ENCODE measurements at regions of chr1 and their contacts with region 1.

Region 1: GRCh38 chr1:109493805-109494539 is at the start of gene CYB561D1:
- DNase-seq: peak; percentile 95
- ATAC-seq: peak; percentile 89
- H3K4me3 Mint-ChIP-seq: peak within 1 kb of the TSS; percentile 98
- H3K27ac Mint-ChIP-seq: peak within 1 kb of the TSS; percentile 90
- H3K4me1 Mint-ChIP-seq: peaks cover 45% of the 10 kb centered on the region
- H3K27me3 Mint-ChIP-seq: no peaks in the 10 kb centered on the region
- total RNA-seq, gene CYB561D1: 7.1 to 8.7 TPM

Region 2: DNA sequence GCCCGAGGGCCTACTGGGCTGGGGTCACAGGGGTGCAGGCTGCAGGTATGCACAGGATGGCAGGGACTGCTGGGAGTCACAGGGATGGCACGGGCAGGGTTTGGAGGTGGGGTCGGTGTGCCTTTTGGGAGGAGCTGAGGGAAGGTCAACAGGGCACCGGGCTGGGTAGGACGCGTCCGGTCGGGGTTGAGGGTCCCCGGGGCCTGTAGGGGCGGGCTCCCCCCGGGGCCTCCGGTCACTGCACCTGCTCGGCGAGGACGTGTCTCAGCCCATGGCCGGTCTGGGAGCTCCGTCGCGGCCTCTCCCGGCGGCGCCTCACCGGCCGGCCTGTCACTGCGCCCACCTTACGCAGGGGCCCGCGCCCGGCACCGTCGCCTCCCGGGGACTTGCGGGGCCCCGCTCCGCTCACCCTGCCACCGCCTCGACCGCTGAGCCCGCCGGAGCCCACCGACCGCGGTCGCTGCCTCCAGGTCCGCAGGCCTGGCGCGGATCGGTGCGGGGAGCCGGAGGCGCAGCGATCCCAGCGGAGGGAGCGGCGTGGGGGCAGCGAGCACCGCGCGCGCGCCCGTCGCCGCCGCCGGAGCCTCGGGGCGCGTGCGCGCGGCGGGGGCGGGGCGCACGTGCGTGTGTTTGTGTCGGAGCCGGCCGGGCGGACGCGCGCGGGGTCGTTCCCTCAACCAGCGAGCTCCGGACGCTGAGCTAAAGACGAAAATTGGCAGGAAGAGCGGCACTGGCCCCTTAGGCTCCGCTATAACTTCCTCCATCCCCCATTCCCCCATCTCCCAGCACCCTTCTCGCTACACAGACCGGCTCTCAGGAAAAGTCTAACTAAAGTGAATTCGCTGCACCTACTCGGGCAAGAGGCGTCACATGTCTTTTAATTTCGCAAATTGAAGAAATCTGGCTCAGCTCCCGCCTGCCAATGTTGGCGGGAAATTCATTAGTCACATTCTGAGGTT is 15.5 kb after region 1 on chr1 and contains the start of gene AMIGO1:
- CTCF ChIA-PET with region 1: interaction called, 354 read pairs
- POLR2A ChIA-PET with region 1: interaction called, 5 read pairs
- intact Hi-C with region 1: loop called in 1 of 2 experiments (anchors 1 kb)
- DNase-seq: peak; percentile 73
- ATAC-seq: peak; percentile 56
- H3K4me3 Mint-ChIP-seq: peak within 1 kb of the TSS; percentile 77
- H3K27ac Mint-ChIP-seq: peak within 1 kb of the TSS; percentile 76
- H3K4me1 Mint-ChIP-seq: peaks cover 59% of the 10 kb centered on the region
- H3K27me3 Mint-ChIP-seq: no peaks in the 10 kb centered on the region
- total RNA-seq, gene AMIGO1: 1.8 to 2.0 TPM

Region 3: DNA sequence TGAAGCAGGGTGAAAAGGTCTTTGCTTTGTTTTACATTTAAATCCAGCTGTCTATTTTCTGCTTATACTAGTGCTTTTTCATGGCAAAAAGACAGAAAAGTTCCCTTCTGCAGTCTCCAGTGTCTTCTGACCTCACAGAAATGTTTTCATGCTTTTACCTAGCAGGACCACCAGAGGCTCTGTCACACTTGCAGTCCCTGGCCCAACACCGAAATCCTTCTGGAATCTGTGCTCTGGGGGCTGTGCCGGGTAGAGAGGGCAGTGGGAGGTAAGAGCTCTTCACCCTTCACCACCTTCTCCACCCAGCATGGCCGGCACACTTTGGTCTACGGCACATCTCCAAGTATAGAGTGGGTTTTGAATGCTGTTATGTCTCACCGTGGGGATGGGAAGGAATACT is 104.7 kb after region 1 on chr1:
- CTCF ChIA-PET with region 1: no interaction called
- POLR2A ChIA-PET with region 1: no interaction called
- intact Hi-C with region 1: no loop called
- DNase-seq: no peak
- ATAC-seq: no peak
- H3K4me3 Mint-ChIP-seq: no peak overlapping the region
- H3K27ac Mint-ChIP-seq: no peak overlapping the region
- H3K4me1 Mint-ChIP-seq: peaks cover 21% of the 10 kb centered on the region
- H3K27me3 Mint-ChIP-seq: no peaks in the 10 kb centered on the region